ENCODE measurements at regions of chr20 and their contacts with region 1.

Region 1: DNA sequence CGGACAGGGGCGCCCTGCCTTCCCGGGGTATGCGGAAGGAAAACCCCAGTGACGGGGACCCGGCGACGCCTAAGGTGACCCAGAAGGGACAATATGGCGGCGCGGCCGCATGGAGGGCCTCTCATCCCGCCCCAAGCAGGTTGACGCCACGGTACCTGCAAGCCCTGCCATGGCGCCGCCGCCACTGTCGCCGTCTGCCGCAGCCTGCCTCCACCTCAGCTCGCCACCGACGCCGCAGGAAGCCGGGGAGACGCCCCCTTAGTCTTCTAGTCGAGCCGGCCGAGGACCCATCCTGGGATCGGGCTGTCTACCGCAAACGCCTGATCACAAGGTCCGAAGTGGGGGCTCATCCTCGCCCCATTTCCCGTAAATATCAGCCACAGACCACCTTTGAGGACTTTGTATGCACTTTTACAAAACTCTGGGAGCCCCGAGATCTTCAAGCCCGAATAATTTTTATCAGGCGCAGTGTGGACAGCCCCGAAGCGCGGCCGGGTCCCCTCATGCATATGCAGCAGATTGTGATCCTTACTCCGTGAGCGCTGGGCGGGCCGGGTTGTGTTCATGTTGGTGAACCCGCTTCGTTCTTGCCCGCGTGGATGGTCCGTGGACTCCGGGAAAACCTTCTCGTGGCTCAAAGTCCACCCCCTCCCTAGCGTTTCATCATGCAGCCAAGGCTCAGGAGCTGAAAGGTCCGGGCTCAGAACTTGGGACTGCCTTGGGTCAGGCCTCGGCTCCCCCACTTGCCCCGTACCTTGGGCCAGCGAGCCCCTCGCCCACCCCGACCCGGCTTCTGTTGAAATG is at the start of gene BLCAP:
- DNase-seq: peak; percentile 94
- H3K4me3 ChIP-seq: peak within 1 kb of the TSS; percentile 87 to 100 (median 92)
- H3K27ac ChIP-seq: peak within 1 kb of the TSS; percentile 92 to 99 (median 94)
- H3K4me1 ChIP-seq: peaks cover 22 to 48% (median 41%) of the 10 kb centered on the region in 4 donors
- H3K27me3 ChIP-seq: no peaks in the 10 kb centered on the region
- CTCF ChIP-seq: peak in 1 of 5 experiments; percentile 25
- EP300 ChIP-seq: no peak
- POLR2A ChIP-seq: peak; percentile 97
- total RNA-seq, gene BLCAP: 80.8 to 283 (median 117) TPM

Region 2: DNA sequence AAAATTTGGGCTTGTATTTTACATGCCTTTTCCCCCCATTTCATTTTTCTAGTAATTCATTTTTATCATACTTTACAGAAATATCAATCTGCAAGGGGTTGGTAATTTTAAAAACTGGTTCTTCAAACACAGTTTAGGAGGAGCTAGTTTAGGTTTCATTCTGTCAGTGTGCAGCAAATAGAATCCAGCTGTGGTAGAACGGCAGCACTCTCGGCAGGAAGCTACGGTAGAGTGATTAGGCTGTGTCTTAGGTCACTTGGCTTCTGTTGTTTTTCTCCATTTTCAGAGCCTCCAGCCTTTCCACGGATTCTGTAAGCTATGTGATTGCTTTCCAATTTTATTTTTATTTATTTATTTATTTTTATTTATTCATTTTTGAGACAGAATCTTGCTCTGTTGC is 619.2 kb before region 1 on chr20:
- in situ Hi-C with region 1: no loop called
- intact Hi-C with region 1: no loop called
- DNase-seq: no peak
- H3K4me3 ChIP-seq: no peak overlapping the region
- H3K27ac ChIP-seq: no peak overlapping the region
- H3K4me1 ChIP-seq: no peaks in the 10 kb centered on the region
- H3K27me3 ChIP-seq: no peaks in the 10 kb centered on the region
- CTCF ChIP-seq: no peak
- EP300 ChIP-seq: no peak
- POLR2A ChIP-seq: no peak

Region 3: GRCh38 chr20:37202267-37202943 is 325.4 kb before region 1 on chr20:
- in situ Hi-C with region 1: loop called in 1 of 4 experiments (anchors 10 kb)
- intact Hi-C with region 1: loop called (anchors 10 kb)
- DNase-seq: peak; percentile 26
- H3K4me3 ChIP-seq: no peak overlapping the region
- H3K27ac ChIP-seq: peak overlapping the region; percentile 51 to 66 (median 56)
- H3K4me1 ChIP-seq: peaks cover 0 to 10% (median 4%) of the 10 kb centered on the region in 4 donors
- H3K27me3 ChIP-seq: no peaks in the 10 kb centered on the region
- CTCF ChIP-seq: peak; percentile 64 to 78 (median 76)
- EP300 ChIP-seq: no peak
- POLR2A ChIP-seq: no peak

Region 4: GRCh38 chr20:37615340-37616109 is 87.7 kb after region 1 on chr20:
- in situ Hi-C with region 1: no loop called
- intact Hi-C with region 1: no loop called
- DNase-seq: peak; percentile 44
- H3K4me3 ChIP-seq: no peak overlapping the region
- H3K27ac ChIP-seq: no peak overlapping the region
- H3K4me1 ChIP-seq: no peaks in the 10 kb centered on the region
- H3K27me3 ChIP-seq: peaks cover 12% of the 10 kb centered on the region
- CTCF ChIP-seq: peak; percentile 52 to 80 (median 62)
- EP300 ChIP-seq: no peak
- POLR2A ChIP-seq: no peak